ENCODE measurements at regions of chr15 and their contacts with region 1.

Region 1: GRCh38 chr15:44788748-44789147 is 52.4 kb downstream of the TRIM69 start:
- DNase-seq: no peak
- H3K4me3 ChIP-seq: no peak overlapping the region
- H3K27ac ChIP-seq: no peak overlapping the region
- H3K4me1 ChIP-seq: peaks cover 0 to 5% (median 3%) of the 10 kb centered on the region in 4 donors
- H3K27me3 ChIP-seq: peaks cover 0 to 11% (median 0%) of the 10 kb centered on the region in 4 donors
- CTCF ChIP-seq: no peak
- EP300 ChIP-seq: no peak
- POLR2A ChIP-seq: no peak

Region 2: DNA sequence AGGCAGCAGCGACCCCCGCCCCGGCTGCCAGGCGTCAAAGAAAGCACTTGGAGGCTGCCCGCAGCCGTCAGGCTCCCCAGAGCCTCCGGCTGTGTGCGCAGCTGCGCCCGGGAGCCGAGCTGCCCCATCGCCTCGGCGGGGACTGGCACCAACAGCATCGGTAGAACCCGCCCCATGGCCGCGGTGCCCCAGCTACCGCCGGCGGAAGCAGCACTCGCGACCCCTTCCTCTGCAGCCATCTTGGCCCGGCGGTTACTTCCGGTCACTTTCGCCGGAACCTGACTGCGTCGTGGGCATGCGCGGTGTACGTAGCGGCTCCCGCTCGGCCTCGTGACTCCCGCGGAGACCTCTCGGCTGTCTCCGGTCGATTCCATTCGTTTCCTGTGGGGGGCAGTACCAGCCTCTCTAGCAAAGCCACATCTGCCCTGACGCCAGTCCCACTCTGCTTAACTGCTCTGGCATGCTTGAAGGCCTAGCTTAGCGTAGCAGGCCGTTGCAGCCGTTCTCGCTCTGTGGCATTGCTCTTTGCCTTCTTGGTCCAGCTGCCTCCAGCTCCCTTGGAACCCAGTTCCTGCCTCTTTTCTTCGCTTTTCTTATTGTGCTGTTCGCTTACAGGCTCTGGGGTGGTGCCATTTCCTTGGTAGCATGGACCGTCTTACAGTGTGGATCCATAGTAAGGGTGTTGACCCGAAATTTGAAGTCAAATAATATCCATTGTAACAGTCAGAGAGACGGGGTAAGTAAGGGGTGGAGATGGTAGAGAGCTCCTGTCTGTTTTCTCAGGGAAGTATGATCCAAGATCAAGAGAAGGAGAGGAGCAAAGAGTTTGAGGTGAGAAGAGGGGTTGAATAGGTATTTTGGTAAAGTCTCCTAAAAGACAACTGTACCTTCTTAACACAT is 125.1 kb before region 1 on chr15 and contains the start of gene SPG11:
- intact Hi-C with region 1: loop called (anchors 5 kb)
- DNase-seq: peak; percentile 99
- H3K4me3 ChIP-seq: peak within 1 kb of the TSS; percentile 78 to 99 (median 90)
- H3K27ac ChIP-seq: peak within 1 kb of the TSS; percentile 93 to 100 (median 96)
- H3K4me1 ChIP-seq: peaks cover 18 to 24% (median 21%) of the 10 kb centered on the region in 4 donors
- H3K27me3 ChIP-seq: no peaks in the 10 kb centered on the region
- CTCF ChIP-seq: peak; percentile 93 to 99 (median 97)
- EP300 ChIP-seq: no peak
- POLR2A ChIP-seq: peak; percentile 90
- total RNA-seq, gene SPG11: 40.4 to 80.6 (median 55.2) TPM

Measured in esophagus muscularis mucosa (tissue), 4 donors.